Activated CD4-positive, alpha-beta T cell treated with anti-CD3 and anti-CD28 coated beads, Interleukin-2, amount 10 ng/mL, durations not matched to agents 24 days and 14 days (primary cell): ENCODE measurements at regions of chr11 and their contacts with region 1.

Region 1: GRCh38 chr11:126268708-126269579 is at the starts of genes FOXRED1 and SRPRA:
- DNase-seq: peak; percentile 100
- H3K4me3 Mint-ChIP-seq: peak within 1 kb of the TSS; percentile 95
- H3K27ac Mint-ChIP-seq: peak within 1 kb of the TSS; percentile 92
- H3K4me1 Mint-ChIP-seq: peaks cover 33% of the 10 kb centered on the region
- H3K27me3 Mint-ChIP-seq: no peaks in the 10 kb centered on the region
- total RNA-seq, gene FOXRED1: 57.8 and 59.2 TPM in 2 replicates
- total RNA-seq, gene SRPRA: 180 and 191 TPM in 2 replicates

Region 2: GRCh38 chr11:124875943-124876817 is 1392.8 kb before region 1 on chr11:
- intact Hi-C with region 1: loop called (anchors 5 kb)
- DNase-seq: peak; percentile 95
- H3K4me3 Mint-ChIP-seq: peak overlapping the region; percentile 91
- H3K27ac Mint-ChIP-seq: peak overlapping the region; percentile 86
- H3K4me1 Mint-ChIP-seq: peaks cover 11% of the 10 kb centered on the region
- H3K27me3 Mint-ChIP-seq: peaks cover 47% of the 10 kb centered on the region

Region 3: DNA sequence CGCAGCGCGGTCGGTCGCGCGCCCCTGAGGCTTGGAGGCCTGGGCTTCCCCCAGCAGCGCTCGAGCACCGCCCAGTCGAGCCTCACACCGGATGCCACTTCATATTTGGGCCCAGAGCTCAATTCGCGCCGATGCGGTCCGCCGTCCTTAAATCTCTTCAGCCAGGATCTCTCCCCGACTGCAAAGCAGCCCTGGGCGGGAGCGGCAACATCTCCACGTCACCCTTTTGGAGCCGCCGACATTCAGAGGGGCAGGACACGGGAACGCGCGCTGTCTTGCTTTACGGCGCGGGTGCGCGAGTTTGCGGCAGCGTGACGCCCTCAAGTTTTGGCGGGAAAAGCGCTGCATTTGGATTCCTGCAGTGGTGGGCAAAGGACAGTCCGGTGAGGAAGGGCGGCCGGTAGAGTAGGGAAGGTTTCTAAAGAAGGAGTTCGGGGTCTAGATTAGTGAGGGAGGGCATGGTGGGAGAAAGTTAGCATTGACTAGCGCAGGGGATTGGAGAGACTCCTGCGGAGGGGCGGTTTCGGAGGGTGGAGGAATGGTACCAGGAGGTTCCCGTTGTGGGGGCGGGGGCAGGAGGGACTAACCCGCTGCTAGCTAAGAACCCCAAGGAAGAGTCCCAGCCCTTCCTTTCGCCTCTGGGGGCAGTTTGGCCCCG is 643.2 kb before region 1 on chr11:
- intact Hi-C with region 1: loop called (anchors 2 kb)
- DNase-seq: peak; percentile 96
- H3K4me3 Mint-ChIP-seq: peak overlapping the region; percentile 93
- H3K27ac Mint-ChIP-seq: peak overlapping the region; percentile 95
- H3K4me1 Mint-ChIP-seq: peaks cover 24% of the 10 kb centered on the region
- H3K27me3 Mint-ChIP-seq: no peaks in the 10 kb centered on the region

Region 4: DNA sequence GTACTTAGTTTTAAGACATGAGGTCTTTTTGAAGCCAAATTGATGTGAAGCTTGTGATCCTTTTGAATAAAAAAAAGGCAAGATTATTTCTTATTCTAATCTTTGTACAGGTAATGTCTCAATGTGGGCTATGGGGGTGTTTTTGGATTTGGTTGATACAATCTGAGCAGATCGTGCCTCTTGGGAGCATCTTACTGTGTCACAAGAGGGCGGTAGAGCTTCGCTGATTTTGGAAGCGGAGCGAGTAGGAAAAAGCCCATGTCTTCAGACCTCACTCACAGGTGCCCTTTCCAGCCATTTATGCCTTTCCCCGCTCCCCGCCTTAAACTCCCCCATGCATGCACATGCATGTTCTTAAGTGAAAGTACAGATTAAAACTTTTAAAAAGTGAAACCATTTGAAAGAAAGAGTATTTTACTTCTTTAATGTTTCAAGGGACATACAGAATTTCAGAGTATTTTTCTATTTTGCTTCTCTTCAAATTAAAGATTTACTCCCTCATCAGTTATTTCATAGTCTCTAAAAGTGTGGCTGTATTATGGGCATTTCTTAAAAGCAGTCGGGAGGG is 345.8 kb before region 1 on chr11:
- intact Hi-C with region 1: loop called (anchors 10 kb)
- DNase-seq: peak; percentile 89
- H3K4me3 Mint-ChIP-seq: no peak overlapping the region
- H3K27ac Mint-ChIP-seq: no peak overlapping the region
- H3K4me1 Mint-ChIP-seq: no peaks in the 10 kb centered on the region
- H3K27me3 Mint-ChIP-seq: peaks cover 8% of the 10 kb centered on the region

Region 5: DNA sequence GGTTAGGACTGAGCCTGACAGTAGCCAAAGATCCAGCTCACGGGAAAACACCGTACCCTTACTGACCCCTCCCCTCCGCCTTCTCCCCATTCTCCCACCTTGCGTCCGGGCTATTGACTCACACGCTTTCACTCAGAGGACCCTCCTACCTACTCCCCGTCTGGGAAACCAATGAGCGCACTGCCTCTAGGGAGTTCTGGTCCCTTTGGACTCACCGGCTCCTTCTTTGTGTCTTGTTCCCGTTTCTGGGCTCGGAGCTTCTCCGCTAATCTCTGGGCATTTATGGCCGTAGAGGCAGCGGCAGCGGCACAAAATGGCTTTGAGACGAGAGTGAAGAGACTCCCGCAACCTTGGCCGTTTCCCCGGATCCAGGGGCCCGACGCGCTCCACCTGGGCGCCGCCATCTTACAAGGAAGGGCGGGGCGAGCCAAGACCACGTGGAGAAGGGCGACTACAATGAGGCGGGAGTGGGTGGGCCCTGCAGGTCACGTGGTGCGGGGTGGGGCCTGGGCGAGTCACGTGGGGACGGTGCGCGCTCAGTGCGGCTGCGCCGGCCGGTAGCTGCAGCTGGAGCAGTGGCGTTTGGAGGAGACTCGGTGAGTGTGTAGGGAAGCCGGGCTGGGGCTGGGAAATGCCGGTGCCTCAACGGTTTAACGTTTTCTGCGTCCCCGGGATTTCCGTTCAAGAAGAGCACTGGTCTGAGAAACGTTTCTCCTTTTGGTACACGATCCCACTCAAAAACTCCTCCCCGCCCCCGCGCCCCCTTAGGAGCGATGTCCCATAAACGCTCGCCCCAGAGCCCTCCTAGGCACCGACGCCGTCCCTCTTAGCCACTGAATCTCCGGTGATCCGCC is 57.5 kb before region 1 on chr11 and contains the starts of genes FAM118B and RPUSD4:
- intact Hi-C with region 1: loop called (anchors 1 kb)
- DNase-seq: peak; percentile 100
- H3K4me3 Mint-ChIP-seq: peak within 1 kb of the TSS; percentile 100
- H3K27ac Mint-ChIP-seq: peak within 1 kb of the TSS; percentile 97
- H3K4me1 Mint-ChIP-seq: peaks cover 32% of the 10 kb centered on the region
- H3K27me3 Mint-ChIP-seq: peaks cover 7% of the 10 kb centered on the region
- total RNA-seq, gene FAM118B: 12.8 and 14.2 TPM in 2 replicates
- total RNA-seq, gene RPUSD4: 48.6 and 51.1 TPM in 2 replicates

Region 6: GRCh38 chr11:126231725-126232459 is 37.1 kb before region 1 on chr11:
- intact Hi-C with region 1: no loop called
- DNase-seq: no peak
- H3K4me3 Mint-ChIP-seq: no peak overlapping the region
- H3K27ac Mint-ChIP-seq: no peak overlapping the region
- H3K4me1 Mint-ChIP-seq: no peaks in the 10 kb centered on the region
- H3K27me3 Mint-ChIP-seq: no peaks in the 10 kb centered on the region

Region 7: DNA sequence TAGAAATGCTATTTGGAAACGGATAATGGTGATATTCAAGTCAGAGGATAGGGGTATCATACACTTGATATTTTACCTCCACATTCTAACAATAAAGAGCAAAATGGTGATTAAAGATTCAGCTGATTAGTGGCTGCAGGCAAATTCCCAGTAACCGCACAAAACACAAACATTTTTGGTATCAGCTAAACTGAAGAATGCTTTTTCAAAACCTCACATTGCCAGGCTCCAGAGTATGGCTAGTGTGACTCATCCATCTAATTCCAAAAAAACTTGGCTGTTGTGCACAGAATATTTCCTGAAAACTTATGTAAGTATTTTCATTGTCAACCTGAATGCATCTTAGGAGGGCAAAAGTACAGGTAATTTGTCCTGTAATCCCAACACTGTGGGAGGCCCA is 11.2 kb before region 1 on chr11:
- intact Hi-C with region 1: no loop called
- DNase-seq: no peak
- H3K4me3 Mint-ChIP-seq: no peak overlapping the region
- H3K27ac Mint-ChIP-seq: no peak overlapping the region
- H3K4me1 Mint-ChIP-seq: peaks cover 2% of the 10 kb centered on the region
- H3K27me3 Mint-ChIP-seq: no peaks in the 10 kb centered on the region

Region 8: DNA sequence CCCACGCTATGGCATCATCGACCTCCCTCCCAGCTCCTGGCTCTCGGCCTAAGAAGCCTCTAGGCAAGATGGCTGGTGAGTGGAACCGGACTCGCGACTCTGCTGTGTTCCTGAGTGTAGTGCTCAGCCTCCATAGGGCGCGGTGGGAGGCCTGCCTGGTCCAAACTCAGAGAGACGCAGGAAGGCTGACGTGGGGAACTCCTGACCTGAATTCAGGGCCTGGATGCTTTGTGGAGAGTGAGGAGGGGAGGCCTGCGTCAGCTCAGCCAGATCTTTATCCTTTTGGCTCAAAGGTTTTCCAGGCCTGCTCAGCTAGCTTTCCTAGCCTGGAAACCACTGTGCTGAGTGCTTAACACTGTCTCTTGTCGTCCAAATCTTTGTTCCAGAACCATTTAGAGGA is 21.9 kb after region 1 on chr11:
- intact Hi-C with region 1: no loop called
- DNase-seq: no peak
- H3K4me3 Mint-ChIP-seq: no peak overlapping the region
- H3K27ac Mint-ChIP-seq: peak overlapping the region; percentile 29
- H3K4me1 Mint-ChIP-seq: peaks cover 9% of the 10 kb centered on the region
- H3K27me3 Mint-ChIP-seq: no peaks in the 10 kb centered on the region

Region 9: DNA sequence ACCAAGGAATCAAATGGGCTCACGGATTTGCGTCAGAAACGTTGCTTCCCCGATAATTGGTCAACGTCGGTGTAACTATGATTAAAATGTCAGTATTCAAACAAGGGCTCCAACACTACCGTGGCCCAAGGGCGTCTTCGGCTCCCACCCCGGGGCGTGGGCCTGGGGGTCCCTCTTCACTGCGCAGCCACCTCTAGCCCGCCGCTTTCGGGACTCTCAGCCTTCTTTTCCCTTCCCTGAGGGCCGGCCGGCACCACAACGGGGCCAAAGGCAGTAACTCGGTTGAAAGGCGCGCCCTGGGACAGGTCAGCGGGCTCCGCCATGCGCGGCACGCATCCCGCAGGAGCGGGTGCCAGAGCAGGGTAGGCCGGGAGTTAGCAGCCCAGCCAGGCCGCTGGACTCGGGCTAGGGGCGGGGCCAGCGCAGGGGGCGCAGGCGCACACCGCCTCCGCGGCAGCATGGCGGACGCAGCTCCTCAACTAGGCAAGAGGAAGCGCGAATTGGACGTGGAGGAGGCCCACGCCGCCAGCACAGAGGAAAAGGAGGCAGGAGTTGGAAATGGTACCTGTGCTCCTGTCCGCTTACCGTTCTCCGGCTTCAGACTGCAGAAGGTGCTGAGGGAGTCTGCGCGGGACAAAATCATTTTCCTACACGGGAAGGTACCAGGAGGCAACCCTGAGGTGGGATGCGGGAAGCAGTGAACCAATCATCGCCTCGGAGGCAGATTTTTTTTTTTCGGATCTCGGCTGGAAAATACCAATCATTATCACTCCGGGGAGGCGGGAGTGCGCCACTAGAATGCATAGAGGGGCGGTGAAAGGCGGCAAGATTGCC is 34.9 kb after region 1 on chr11 and contains the start of gene DCPS:
- intact Hi-C with region 1: loop called (anchors 1 kb)
- DNase-seq: peak; percentile 97
- H3K4me3 Mint-ChIP-seq: peak within 1 kb of the TSS; percentile 91
- H3K27ac Mint-ChIP-seq: peak within 1 kb of the TSS; percentile 97
- H3K4me1 Mint-ChIP-seq: peaks cover 19% of the 10 kb centered on the region
- H3K27me3 Mint-ChIP-seq: no peaks in the 10 kb centered on the region
- total RNA-seq, gene DCPS: 36.0 and 40.2 TPM in 2 replicates

Region 10: DNA sequence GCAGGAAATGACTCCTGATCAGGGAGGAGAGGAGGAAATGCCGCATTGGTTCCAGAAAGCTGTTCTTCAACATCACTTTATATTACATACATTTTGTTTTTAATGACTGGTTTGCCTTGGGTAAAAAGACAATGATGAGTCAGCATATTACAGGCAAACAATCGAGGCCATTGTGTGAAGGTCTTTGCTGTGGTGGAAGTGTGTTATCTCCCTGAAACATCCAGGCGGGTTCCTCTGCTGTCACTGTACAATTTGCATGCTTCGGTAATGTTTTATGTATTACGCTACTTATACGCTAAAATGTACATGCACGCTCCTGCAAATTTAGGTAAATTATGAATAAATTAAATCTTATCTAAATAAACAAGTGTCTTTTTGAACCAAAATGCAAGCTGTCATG is 570.6 kb after region 1 on chr11:
- intact Hi-C with region 1: no loop called
- DNase-seq: no peak
- H3K4me3 Mint-ChIP-seq: no peak overlapping the region
- H3K27ac Mint-ChIP-seq: no peak overlapping the region
- H3K4me1 Mint-ChIP-seq: no peaks in the 10 kb centered on the region
- H3K27me3 Mint-ChIP-seq: no peaks in the 10 kb centered on the region